GM10248 (cell line): ENCODE measurements at regions of chr12 and their contacts with region 1.

Region 1: GRCh38 chr12:92145731-92146496 is at the start of gene BTG1:
- DNase-seq: peak; percentile 93
- CTCF ChIP-seq: peak; percentile 18

Region 2: DNA sequence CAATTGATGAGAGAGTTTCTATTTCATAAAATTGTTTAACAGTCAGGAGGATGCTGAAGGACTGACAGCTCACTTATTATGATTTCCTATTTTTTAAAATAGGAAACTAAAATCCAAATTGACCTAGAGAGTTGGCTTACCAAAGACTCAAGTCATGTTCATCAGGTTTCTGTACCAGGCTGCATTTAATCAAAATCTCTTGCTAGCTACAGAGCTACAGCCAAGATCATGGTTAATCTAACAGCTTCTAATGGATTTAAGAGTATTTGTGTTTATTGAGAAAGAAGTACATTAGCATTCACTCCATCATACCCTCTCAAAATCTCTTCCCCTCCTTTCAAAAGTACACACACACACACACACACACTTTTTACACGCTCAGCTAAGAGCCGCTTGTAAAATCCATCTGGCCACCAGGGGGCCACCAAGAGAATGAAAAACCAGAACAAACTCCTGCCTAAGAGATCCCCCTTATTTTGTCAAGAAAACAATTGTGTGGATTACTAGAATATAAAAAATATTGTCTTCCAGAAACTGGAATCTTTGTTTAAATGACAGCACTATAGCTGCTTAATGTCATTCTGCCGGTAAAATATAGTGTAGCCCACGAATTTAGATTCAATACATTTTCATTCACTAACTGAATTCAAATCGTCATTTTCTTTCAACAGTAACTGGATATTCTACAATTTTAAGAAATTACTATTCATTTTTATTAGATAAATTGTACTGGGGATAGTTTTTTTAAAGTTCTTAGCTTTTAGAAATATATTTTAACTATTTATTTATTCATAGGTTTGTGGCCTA is 334.2 kb before region 1 on chr12:
- CTCF ChIA-PET with region 1: interaction called, 10 read pairs
- POLR2A ChIA-PET with region 1: interaction called, 3 read pairs
- DNase-seq: peak; percentile 27
- CTCF ChIP-seq: peak; percentile 69

Region 3: DNA sequence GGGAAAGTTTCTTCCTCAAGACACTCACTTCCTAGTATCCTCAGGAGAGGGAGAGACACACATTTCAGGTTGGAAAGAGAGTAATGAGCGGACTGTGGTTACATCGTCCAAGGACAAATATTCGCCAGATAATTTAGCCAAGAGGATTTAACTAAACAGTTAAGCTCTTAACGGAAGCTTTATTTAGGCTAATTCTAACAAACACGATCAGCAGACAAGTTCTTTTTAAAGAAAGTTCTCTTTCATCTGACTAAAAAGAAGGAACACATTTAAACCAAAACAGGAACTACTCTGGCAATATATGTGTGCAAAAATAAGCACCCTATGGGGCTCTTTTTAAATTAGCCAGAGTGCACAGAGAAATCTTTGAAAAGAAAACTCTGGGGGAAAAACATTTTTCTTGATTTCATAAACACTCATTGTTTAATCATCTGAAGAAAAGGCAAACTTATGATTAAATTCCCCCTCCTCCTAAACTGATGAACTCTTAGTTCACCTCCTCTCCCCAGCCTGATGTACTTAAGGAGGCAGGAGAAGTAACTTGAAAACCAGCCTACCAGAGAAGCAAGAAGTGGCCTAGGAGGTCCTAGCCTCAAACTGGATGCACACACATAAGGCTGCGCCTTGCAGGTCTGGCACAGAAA is 13.0 kb after region 1 on chr12:
- CTCF ChIA-PET with region 1: interaction called, 5 read pairs
- POLR2A ChIA-PET with region 1: interaction called, 35 read pairs
- DNase-seq: no peak
- CTCF ChIP-seq: no peak

Region 4: DNA sequence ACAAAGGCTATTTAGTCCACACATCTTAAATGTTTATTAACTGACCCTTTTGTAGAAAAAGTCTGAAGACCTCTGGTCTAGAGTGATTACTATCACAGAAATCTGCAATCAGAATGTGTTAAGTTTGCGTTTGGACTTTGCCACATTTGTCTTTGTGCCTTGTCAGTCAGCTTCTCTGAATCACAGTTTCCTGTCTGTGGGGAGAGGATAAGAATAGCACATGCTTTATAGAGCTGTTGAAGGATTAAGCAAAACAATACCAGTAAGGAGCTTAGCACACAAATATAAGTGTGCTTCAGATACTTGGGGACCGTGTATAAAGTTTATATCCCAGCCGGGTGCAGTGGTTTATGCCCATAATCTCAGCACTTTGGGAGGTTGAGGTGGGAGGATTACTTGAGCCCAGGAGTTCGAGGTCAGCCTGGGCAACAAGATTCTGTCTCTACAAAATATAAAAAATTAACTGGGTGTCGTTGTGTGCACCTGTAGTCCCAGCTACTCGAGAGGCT is 62.8 kb after region 1 on chr12:
- CTCF ChIA-PET with region 1: interaction called, 3 read pairs
- POLR2A ChIA-PET with region 1: interaction called, 14 read pairs
- DNase-seq: peak; percentile 43
- CTCF ChIP-seq: no peak

Region 5: DNA sequence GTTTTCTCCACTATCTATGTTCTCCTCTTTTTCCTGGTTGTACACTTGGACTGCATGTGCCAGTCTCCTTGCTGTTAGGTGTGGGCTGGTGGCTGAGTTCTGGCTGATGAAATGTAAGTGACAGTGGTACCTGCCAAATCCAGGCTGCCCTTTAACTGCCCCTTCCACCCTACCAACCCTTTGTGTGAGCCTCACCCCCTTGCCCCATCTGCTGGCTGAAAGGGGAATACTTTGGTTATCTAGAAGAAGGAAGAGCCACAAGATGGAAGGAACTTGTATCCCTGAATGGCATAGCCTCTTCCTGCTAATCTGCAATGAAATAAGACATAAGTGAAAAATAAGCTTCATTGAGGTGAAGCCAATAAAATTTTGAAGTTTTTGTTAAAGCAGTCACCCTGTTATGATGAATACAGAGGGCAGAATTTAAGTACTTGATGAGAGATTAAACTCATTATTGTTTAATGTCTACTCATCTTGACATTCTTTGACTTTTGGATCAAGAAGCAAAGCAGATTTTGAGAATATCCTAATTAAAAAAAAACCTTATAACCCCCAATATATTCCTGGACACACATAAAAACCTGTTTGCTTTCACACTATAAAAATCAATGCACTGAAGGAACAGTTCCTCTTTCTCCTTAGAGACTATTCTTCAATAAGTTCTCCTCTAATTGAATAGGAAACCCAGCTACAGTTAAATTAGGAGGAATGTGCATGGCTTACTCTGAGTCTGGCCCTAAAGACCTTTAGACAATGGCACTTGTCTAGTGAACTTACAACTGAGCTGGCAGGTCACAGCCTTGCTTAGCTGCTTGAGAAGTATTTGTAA is 262.4 kb after region 1 on chr12:
- CTCF ChIA-PET with region 1: interaction called, 7 read pairs
- POLR2A ChIA-PET with region 1: interaction called, 22 read pairs
- DNase-seq: peak; percentile 38
- CTCF ChIP-seq: peak; percentile 53

Region 6: GRCh38 chr12:92505254-92506231 is 359.6 kb after region 1 on chr12:
- CTCF ChIA-PET with region 1: interaction called, 5 read pairs
- POLR2A ChIA-PET with region 1: interaction called, 28 read pairs
- DNase-seq: peak; percentile 33
- CTCF ChIP-seq: no peak

Region 7: DNA sequence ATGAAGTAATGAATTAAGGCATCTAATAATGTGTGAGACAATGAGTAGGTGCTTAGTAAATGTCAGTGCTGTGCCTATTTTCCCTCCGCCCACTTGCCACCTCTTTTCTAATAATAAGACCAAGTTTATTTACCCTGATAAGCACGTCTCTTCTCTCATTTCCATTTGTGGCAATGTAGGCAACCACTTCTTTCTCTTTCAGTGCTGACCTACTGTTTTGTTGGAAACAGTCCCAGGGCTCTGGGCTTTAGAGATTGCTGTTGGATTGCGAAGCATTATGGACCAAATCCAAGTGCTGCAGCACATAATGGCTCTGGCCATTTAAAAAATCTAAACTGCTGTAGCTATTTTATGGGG is 415.6 kb after region 1 on chr12:
- CTCF ChIA-PET with region 1: interaction called, 5 read pairs
- POLR2A ChIA-PET with region 1: interaction called, 18 read pairs
- DNase-seq: no peak
- CTCF ChIP-seq: no peak